Activated CD4-positive, alpha-beta T cell treated with anti-CD3 and anti-CD28 coated beads, Interleukin-2, amount 10 ng/mL, durations not matched to agents 24 days and 14 days (primary cell): ENCODE measurements at regions of chr18 and their contacts with region 1.

Region 1: GRCh38 chr18:56727399-56727798 is 76.2 kb downstream of the WDR7 start:
- DNase-seq: no peak
- H3K4me3 Mint-ChIP-seq: no peak overlapping the region
- H3K27ac Mint-ChIP-seq: peak overlapping the region; percentile 46
- H3K4me1 Mint-ChIP-seq: peaks cover 16% of the 10 kb centered on the region
- H3K27me3 Mint-ChIP-seq: no peaks in the 10 kb centered on the region

Region 2: GRCh38 chr18:56709463-56709862 is 17.9 kb before region 1 on chr18:
- intact Hi-C with region 1: loop called (anchors 2 kb)
- DNase-seq: peak; percentile 84
- H3K4me3 Mint-ChIP-seq: no peak overlapping the region
- H3K27ac Mint-ChIP-seq: no peak overlapping the region
- H3K4me1 Mint-ChIP-seq: peaks cover 11% of the 10 kb centered on the region
- H3K27me3 Mint-ChIP-seq: no peaks in the 10 kb centered on the region

Region 3: GRCh38 chr18:56716692-56717146 is 10.7 kb before region 1 on chr18:
- intact Hi-C with region 1: loop called (anchors 1 kb)
- DNase-seq: no peak
- H3K4me3 Mint-ChIP-seq: no peak overlapping the region
- H3K27ac Mint-ChIP-seq: peak overlapping the region; percentile 63
- H3K4me1 Mint-ChIP-seq: peaks cover 26% of the 10 kb centered on the region
- H3K27me3 Mint-ChIP-seq: no peaks in the 10 kb centered on the region